ENCODE measurements at regions of chr1 and their contacts with region 1.

Region 1: DNA sequence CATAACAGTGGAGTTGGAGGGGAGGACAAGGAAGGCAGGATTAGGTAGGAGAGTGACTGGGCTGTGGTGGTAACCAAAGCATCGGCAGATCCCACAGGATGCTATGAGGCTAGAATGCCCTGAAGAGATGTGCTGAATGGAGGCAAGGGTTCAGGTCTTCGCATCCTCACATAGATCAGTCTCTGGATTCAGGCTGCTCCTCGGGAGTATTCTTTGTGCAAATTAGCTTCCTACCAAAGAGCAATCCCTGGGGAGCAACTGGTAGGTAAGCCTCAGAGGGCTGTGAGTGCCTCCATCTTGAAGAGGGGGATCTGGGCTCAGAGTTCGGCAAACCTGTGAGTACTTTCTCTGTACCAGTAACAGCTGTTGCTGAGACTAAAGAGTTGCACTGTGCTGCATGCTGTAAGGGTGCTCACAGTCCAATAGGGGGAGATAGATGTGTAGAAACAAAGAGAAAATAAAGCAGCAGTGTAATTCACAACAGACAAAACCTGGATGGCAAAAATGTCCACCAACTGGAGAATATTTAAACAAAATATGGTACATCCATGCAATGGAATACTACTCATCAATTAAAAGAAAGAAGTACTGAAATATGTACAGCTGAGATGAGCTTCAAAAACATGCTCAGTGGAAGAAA is 322.4 kb upstream of the DEPDC1 start:
- DNase-seq: no peak
- ATAC-seq: peak in 2 of 4 donors; percentile 30 to 50
- H3K4me3 ChIP-seq: no peak overlapping the region
- H3K27ac ChIP-seq: no peak overlapping the region
- H3K4me1 ChIP-seq: no peaks in the 10 kb centered on the region
- H3K27me3 ChIP-seq: no peaks in the 10 kb centered on the region
- CTCF ChIP-seq: peak in 11 of 12 donors; percentile 10 to 47 (median 36)
- POLR2A ChIP-seq: no peak

Region 2: DNA sequence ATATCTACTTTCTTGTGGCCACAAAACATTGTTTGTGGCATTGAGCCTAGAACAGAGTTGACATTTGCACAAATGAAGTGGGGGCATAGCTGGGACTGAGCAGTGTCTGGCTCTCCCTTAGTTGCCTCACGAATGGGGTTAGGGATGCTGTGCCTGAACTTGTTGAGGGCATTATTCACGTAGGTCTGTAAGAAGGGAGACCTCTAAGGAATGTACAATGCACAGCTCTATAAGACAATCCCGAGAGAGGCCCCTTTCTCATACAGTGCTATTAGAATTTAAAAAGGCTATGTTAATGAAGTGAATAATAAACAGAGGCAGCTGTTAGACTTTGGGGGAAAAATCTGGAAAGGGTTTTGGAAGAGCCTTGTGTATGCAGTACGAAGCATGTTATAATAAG is 204.0 kb before region 1 on chr1:
- intact Hi-C with region 1: loop called in 1 of 10 experiments (anchors 10 kb)
- DNase-seq: no peak
- ATAC-seq: no peak
- H3K4me3 ChIP-seq: no peak overlapping the region
- H3K27ac ChIP-seq: no peak overlapping the region
- H3K4me1 ChIP-seq: no peaks in the 10 kb centered on the region
- H3K27me3 ChIP-seq: no peaks in the 10 kb centered on the region
- CTCF ChIP-seq: no peak
- POLR2A ChIP-seq: no peak

Region 3: DNA sequence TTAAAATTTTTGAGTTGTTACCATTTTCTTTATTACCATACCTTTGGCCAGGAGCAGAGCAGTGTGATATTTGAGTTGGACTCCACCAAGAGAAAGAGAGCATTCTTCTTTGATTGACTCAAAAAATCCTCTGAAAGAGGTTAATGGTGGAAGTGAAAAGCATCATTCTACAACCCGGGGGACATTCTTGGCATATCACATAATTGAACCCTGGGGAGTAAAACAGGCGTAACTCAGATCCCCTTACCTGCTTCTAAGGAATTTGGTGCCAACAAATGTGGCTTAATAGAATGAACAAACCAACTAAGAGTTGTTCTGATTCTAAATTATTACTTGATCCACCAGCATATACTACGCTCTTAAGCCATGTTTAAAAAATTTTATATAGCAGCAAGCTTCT is 28.7 kb after region 1 on chr1:
- intact Hi-C with region 1: no loop called
- DNase-seq: no peak
- ATAC-seq: no peak
- H3K4me3 ChIP-seq: no peak overlapping the region
- H3K27ac ChIP-seq: no peak overlapping the region
- H3K4me1 ChIP-seq: no peaks in the 10 kb centered on the region
- H3K27me3 ChIP-seq: no peaks in the 10 kb centered on the region
- CTCF ChIP-seq: no peak
- POLR2A ChIP-seq: no peak

Region 4: DNA sequence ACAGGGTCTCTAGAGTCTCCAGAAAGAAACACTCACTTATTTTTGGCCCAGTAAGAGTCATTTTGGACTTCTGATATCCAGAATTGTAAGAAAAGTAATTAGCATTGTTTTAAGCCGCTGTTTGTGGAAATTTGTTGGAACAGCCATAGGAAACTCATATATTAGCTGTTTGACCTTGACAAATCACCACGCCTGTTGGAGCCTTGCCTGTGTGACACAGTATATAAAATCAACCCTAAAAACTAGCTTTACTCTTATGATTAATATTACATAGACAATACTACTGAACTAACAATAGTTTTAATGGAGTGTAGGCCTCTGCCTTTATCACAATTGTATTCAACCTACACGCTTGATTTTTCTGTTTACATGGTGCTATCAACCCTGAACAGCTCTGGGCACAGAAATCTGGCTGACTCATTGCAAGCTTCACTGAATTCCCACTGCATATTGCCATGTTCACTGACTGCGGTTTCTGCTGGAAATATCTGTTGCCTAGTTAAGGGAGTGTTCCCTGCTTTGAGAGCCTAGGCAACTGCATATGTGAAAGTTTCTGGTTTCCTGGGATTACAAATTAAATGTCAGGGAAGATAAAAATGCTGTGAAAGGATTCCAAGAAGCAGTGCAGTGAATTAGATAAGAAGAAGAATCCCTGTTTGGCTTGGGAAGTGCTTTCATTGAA is 97.1 kb after region 1 on chr1:
- intact Hi-C with region 1: no loop called
- DNase-seq: peak in 1 of 5 donors; percentile 25
- ATAC-seq: peak in 3 of 4 donors; percentile 67 to 82 (median 76)
- H3K4me3 ChIP-seq: no peak overlapping the region
- H3K27ac ChIP-seq: peak overlapping the region in 3 of 12 donors; percentile 15 to 40 (median 21)
- H3K4me1 ChIP-seq: peaks cover 0 to 20% (median 7%) of the 10 kb centered on the region in 12 donors
- H3K27me3 ChIP-seq: no peaks in the 10 kb centered on the region
- CTCF ChIP-seq: no peak
- POLR2A ChIP-seq: no peak

Region 5: DNA sequence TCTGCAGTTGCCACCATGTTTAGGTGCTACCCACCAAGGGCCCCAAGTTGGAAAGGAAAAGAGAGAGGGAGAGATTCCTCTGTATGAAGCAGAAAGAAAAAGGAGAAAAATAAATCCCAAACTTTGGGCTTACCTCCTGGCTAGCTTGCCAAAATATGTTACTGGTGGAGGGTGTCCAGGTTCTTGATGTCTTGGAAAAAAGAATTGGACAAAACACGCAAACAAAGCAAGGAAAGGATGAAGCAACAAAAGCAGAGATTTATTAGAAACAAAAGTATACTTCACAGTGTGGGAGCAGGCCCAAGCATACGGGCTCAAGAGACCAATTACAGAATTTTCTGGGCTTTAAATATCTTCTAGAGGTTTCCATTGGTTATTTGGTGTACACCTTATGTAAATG is 543.9 kb after region 1 on chr1:
- intact Hi-C with region 1: loop called in 1 of 10 experiments (anchors 10 kb)
- DNase-seq: no peak
- ATAC-seq: no peak
- H3K4me3 ChIP-seq: no peak overlapping the region
- H3K27ac ChIP-seq: no peak overlapping the region
- H3K4me1 ChIP-seq: no peaks in the 10 kb centered on the region
- H3K27me3 ChIP-seq: no peaks in the 10 kb centered on the region
- CTCF ChIP-seq: no peak
- POLR2A ChIP-seq: no peak

Measured in heart left ventricle (tissue), 16 donors.